ENCODE measurements at regions of chr19 and their contacts with region 1.

Region 1: GRCh38 chr19:11288343-11288742 is 7.6 kb upstream of the TSPAN16 start:
- DNase-seq: no peak
- H3K4me3 ChIP-seq: no peak overlapping the region
- CTCF ChIP-seq: no peak
- POLR2A ChIP-seq: no peak

Region 2: GRCh38 chr19:11125994-11126685 is 162.2 kb before region 1 on chr19:
- intact Hi-C with region 1: no loop called
- DNase-seq: peak; percentile 73 to 96
- H3K4me3 ChIP-seq: no peak overlapping the region
- CTCF ChIP-seq: peak in 1 of 3 donors; percentile 46
- POLR2A ChIP-seq: no peak

Region 3: GRCh38 chr19:11482384-11483050 is 194.2 kb after region 1 on chr19:
- intact Hi-C with region 1: loop called (anchors 10 kb)
- DNase-seq: peak; percentile 71 to 96
- H3K4me3 ChIP-seq: no peak overlapping the region
- CTCF ChIP-seq: peak in 1 of 3 donors; percentile 56
- POLR2A ChIP-seq: no peak